ENCODE measurements at regions of chr2 and their contacts with region 1.

Region 1: GRCh38 chr2:188248513-188248912 is 43.2 kb upstream of the GULP1 start:
- DNase-seq: no peak
- ATAC-seq: no peak
- H3K4me3 ChIP-seq: no peak overlapping the region
- H3K27ac ChIP-seq: no peak overlapping the region
- H3K4me1 ChIP-seq: no peaks in the 10 kb centered on the region
- H3K27me3 ChIP-seq: no peaks in the 10 kb centered on the region
- CTCF ChIP-seq: no peak
- EP300 ChIP-seq: no peak
- POLR2A ChIP-seq: no peak
- RAD21 ChIP-seq: no peak

Region 2: GRCh38 chr2:188238386-188238785 is 10.1 kb before region 1 on chr2:
- CTCF ChIA-PET with region 1: interaction called, 4 read pairs
- POLR2A ChIA-PET with region 1: interaction called, 3 read pairs
- RAD21 ChIA-PET with region 1: interaction called, 3 read pairs
- SMC1A ChIA-PET with region 1: interaction called, 16 read pairs
- in situ Hi-C with region 1: no loop called
- intact Hi-C with region 1: no loop called
- DNase-seq: no peak
- ATAC-seq: no peak
- H3K4me3 ChIP-seq: no peak overlapping the region
- H3K27ac ChIP-seq: no peak overlapping the region
- H3K4me1 ChIP-seq: no peaks in the 10 kb centered on the region
- H3K27me3 ChIP-seq: no peaks in the 10 kb centered on the region
- CTCF ChIP-seq: no peak
- EP300 ChIP-seq: no peak
- POLR2A ChIP-seq: no peak
- RAD21 ChIP-seq: no peak

Measured in GM12878 (cell line).